ENCODE measurements at regions of chr13 and their contacts with region 1.

Region 1: GRCh38 chr13:106619688-106620555 is 52.0 kb upstream of the ARGLU1 start:
- DNase-seq: peak; percentile 51 to 74 (median 73)
- H3K4me3 ChIP-seq: peak overlapping the region in 4 of 7 experiments; percentile 8 to 62 (median 44)
- H3K27ac ChIP-seq: no peak overlapping the region
- H3K4me1 ChIP-seq: peaks cover 0 to 4% (median under 1%) of the 10 kb centered on the region in 4 experiments
- H3K27me3 ChIP-seq: peaks cover 0 to 10% (median 2%) of the 10 kb centered on the region in 5 experiments

Region 2: DNA sequence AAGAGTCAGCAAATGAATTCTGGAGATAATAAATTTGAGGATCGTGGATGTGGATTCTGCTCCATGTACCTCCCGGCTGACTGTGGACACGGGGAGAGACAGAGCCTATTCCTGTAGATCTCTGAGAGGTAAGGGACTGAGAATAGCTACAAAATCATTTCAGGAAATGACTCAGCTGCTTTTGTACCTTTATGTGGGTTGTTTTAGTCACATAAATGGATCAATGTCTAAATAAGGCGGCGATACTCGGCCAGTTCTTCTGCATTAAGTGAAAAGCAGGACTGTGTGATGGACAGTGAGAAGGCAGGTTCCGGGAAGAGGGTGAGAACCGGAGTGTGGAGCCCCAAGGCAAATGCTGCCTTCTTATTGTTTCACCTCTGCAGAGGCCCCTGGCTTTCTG is 212.6 kb before region 1 on chr13:
- CTCF ChIA-PET with region 1: no interaction called
- POLR2A ChIA-PET with region 1: no interaction called
- DNase-seq: peak in 2 of 3 donors; percentile 6 to 13
- H3K4me3 ChIP-seq: no peak overlapping the region
- H3K27ac ChIP-seq: no peak overlapping the region
- H3K4me1 ChIP-seq: peaks cover 0 to 7% (median 5%) of the 10 kb centered on the region in 4 experiments
- H3K27me3 ChIP-seq: no peaks in the 10 kb centered on the region

Region 3: DNA sequence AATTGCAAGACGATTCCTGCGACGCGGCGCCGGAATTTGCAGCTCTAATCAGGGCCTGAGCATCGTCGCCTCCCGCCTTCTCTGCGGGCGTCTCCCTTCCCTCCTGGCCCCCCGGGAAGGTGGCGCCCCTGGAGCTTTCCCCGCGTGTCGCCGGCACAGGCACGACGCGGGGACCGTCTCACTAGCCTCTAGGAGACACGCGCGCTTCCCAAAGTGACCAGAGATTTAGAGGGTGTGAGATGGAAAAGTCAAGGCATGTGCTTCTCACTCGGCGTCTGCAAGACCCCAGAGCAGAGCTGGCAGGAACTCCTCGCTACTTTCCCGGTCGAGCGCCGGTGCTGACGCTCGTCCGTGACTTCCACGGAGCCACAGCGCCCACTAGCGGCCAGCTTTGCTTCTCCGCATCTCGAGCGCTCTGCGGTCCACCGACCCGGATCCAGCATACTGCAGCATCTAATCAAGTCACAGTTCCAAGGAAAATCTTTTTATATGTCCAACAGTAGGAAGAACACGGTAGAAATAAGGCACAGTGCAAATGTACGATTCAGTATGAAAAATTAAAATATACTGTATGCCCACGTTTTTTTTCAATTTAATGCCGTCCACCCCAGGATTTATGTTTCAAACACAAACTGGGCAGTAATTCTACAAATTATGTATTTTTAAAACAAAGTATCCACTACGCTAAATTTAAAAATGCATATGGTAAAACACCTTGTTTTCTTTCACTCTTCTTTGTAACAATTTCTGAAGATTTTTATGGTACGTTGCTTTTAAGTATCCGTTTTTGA is 83.5 kb before region 1 on chr13:
- CTCF ChIA-PET with region 1: interaction called, 11 read pairs
- POLR2A ChIA-PET with region 1: no interaction called
- DNase-seq: peak; percentile 84 to 91 (median 88)
- H3K4me3 ChIP-seq: peak overlapping the region; percentile 56 to 80 (median 66)
- H3K27ac ChIP-seq: no peak overlapping the region
- H3K4me1 ChIP-seq: peaks cover 1 to 37% (median 33%) of the 10 kb centered on the region in 4 experiments
- H3K27me3 ChIP-seq: peaks cover 0 to 35% (median 20%) of the 10 kb centered on the region in 5 experiments

Region 4: DNA sequence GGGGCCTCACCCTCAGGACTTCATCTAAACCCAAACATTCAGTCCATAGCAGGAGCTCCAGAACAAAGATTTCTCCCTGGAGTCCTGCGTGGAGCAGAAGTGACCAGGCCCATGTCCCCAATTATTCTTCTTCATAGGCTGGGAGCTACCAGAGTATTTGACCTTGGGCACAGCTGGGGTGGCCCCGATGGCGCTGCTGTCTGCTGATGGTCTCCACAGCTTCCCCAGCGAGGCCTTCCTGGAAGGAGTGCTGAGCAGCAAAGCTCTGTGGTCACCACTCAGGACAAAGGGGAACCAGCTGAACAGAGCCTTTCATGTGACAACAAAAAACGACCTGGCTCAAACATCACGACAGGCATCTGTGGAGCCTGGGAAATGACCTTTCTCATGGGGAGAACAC is 10.7 kb after region 1 on chr13:
- CTCF ChIA-PET with region 1: interaction called, 11 read pairs
- POLR2A ChIA-PET with region 1: no interaction called
- DNase-seq: peak in 2 of 3 donors; percentile 18 to 37
- H3K4me3 ChIP-seq: no peak overlapping the region
- H3K27ac ChIP-seq: no peak overlapping the region
- H3K4me1 ChIP-seq: peaks cover 0 to 11% (median 3%) of the 10 kb centered on the region in 4 experiments
- H3K27me3 ChIP-seq: peaks cover 0 to 3% (median 0%) of the 10 kb centered on the region in 5 experiments

Region 5: DNA sequence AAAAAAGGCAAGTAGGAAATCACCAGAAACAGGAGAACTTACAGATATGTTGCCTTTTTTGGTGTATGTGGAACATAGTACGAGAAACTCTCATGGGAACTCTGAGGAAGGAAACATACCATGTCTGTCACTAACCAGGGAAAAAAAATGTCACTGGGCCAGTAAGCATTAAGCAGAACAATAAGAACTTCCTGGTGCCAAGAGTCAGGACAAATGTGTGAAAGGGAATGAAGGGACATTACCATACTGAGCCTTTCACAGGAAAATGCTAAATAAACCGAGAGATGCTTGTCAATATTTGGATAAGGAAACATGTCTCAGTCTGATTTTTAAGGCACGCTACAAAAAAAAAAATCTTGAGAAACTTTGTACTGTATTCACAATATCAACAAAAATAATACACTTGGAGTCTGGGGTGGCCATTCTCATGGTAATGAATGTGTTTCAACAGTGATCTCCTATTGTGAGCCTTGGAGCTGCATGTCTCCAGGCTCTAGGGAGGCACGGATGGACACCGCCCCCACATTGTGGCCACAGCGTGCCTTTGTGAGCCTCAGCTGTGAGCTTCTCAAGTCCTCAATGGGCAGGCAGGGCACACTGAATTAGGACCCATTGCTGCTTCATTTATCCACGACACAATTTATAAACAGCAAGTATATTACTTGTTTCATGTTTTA is 61.0 kb after region 1 on chr13:
- CTCF ChIA-PET with region 1: no interaction called
- POLR2A ChIA-PET with region 1: no interaction called
- DNase-seq: no peak
- H3K4me3 ChIP-seq: no peak overlapping the region
- H3K27ac ChIP-seq: no peak overlapping the region
- H3K4me1 ChIP-seq: peaks cover 0 to 2% (median 0%) of the 10 kb centered on the region in 4 experiments
- H3K27me3 ChIP-seq: no peaks in the 10 kb centered on the region

Region 6: GRCh38 chr13:106691341-106691740 is 71.4 kb after region 1 on chr13:
- CTCF ChIA-PET with region 1: no interaction called
- POLR2A ChIA-PET with region 1: no interaction called
- DNase-seq: no peak
- H3K4me3 ChIP-seq: no peak overlapping the region
- H3K27ac ChIP-seq: no peak overlapping the region
- H3K4me1 ChIP-seq: peaks cover 0 to 1% (median 0%) of the 10 kb centered on the region in 4 experiments
- H3K27me3 ChIP-seq: no peaks in the 10 kb centered on the region

Measured in common myeloid progenitor, CD34-positive (primary cell).